PC-9 (cell line): ENCODE measurements at regions of chr17 and their contacts with region 1.

Region 1: DNA sequence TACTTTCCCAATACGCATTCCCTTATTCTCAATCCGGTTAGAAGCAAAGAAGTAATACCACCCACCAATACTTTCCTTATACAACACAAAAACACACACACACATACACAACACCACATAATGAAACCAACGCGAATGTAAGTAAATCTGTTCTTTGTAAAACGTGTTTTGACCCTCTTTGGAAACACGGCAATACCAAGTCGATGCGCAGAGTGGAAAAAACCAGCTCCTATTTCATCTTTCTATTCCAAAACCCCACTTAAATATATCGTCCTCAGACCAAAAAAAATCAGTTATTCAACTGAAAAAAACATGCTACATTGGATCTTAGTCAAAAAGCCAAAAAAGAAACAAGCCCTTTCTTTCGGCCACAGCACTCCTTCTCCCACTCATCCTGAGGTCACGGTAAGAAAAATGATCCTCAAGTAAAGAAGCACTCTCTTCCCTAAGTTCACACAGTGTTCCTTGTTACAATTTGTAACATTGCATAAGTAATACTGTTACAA is 31.0 kb upstream of the ARL4D start:
- DNase-seq: peak; percentile 46 to 97
- H3K4me3 ChIP-seq: peak overlapping the region; percentile 61; the same call in 1 of the 2 replicates
- H3K27ac ChIP-seq: peak overlapping the region; percentile 100
- H3K4me1 ChIP-seq: peaks cover 42% of the 10 kb centered on the region
- H3K27me3 ChIP-seq: no peaks in the 10 kb centered on the region
- CTCF ChIP-seq: no peak

Region 2: GRCh38 chr17:43170766-43171585 is 196.8 kb before region 1 on chr17 and contains the start of gene NBR1:
- CTCF ChIA-PET with region 1: no interaction called
- POLR2A ChIA-PET with region 1: interaction called, 10 read pairs
- intact Hi-C with region 1: no loop called
- DNase-seq: peak; percentile 93
- H3K4me3 ChIP-seq: peak within 1 kb of the TSS; percentile 71
- H3K27ac ChIP-seq: peak within 1 kb of the TSS; percentile 95
- H3K4me1 ChIP-seq: peaks cover 14% of the 10 kb centered on the region
- H3K27me3 ChIP-seq: no peaks in the 10 kb centered on the region
- CTCF ChIP-seq: no peak
- total RNA-seq, gene NBR1: 80.5 and 93.7 TPM in 2 replicates

Region 3: GRCh38 chr17:43314611-43315011 is 53.2 kb before region 1 on chr17:
- CTCF ChIA-PET with region 1: no interaction called
- POLR2A ChIA-PET with region 1: interaction called, 11 read pairs
- intact Hi-C with region 1: no loop called
- DNase-seq: no peak
- H3K4me3 ChIP-seq: no peak overlapping the region
- H3K27ac ChIP-seq: no peak overlapping the region
- H3K4me1 ChIP-seq: peaks cover 4% of the 10 kb centered on the region; the same call in 1 of the 2 replicates
- H3K27me3 ChIP-seq: no peaks in the 10 kb centered on the region
- CTCF ChIP-seq: no peak

Region 4: GRCh38 chr17:43388359-43389045 is 20.7 kb after region 1 on chr17:
- CTCF ChIA-PET with region 1: interaction called, 11 read pairs
- POLR2A ChIA-PET with region 1: interaction called, 71 read pairs
- intact Hi-C with region 1: loop called (anchors 1 kb)
- DNase-seq: peak; percentile 84 to 91
- H3K4me3 ChIP-seq: peak overlapping the region; percentile 94
- H3K27ac ChIP-seq: peak overlapping the region; percentile 91
- H3K4me1 ChIP-seq: peaks cover 17% of the 10 kb centered on the region
- H3K27me3 ChIP-seq: no peaks in the 10 kb centered on the region
- CTCF ChIP-seq: no peak

Region 5: GRCh38 chr17:43483674-43484372 is 116.0 kb after region 1 on chr17 and contains the start of gene DHX8:
- CTCF ChIA-PET with region 1: interaction called, 8 read pairs
- POLR2A ChIA-PET with region 1: interaction called, 32 read pairs
- intact Hi-C with region 1: loop called (anchors 1 kb)
- DNase-seq: peak; percentile 96 to 97
- H3K4me3 ChIP-seq: peak within 1 kb of the TSS; percentile 87
- H3K27ac ChIP-seq: peak within 1 kb of the TSS; percentile 56
- H3K4me1 ChIP-seq: peaks cover 19% of the 10 kb centered on the region
- H3K27me3 ChIP-seq: no peaks in the 10 kb centered on the region
- CTCF ChIP-seq: peak; percentile 100
- total RNA-seq, gene DHX8: 42.4 and 55.4 TPM in 2 replicates

Region 6: DNA sequence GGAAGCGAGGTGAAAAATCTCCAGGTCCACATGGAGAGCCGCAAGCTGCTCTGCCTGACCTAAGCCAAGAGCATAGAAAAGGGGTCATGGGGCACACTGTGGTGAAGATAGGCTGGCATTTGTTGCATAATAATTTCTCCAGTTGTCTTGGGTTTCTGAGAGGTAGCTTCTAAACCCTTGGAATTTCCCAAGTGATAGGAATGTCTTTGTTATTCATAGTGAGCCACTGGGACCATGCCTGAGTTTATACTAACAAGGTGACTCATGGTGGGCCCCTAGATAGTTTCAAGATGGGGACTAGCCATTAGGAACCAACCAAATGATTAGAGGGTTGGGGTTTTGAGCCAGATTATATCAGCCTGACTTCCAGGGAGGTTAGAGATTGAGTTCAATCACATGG is 365.2 kb after region 1 on chr17:
- CTCF ChIA-PET with region 1: no interaction called
- POLR2A ChIA-PET with region 1: interaction called, 12 read pairs
- intact Hi-C with region 1: no loop called
- DNase-seq: peak in 1 of 2 experiments; percentile 69
- H3K4me3 ChIP-seq: no peak overlapping the region
- H3K27ac ChIP-seq: no peak overlapping the region
- H3K4me1 ChIP-seq: peaks cover 7% of the 10 kb centered on the region
- H3K27me3 ChIP-seq: no peaks in the 10 kb centered on the region
- CTCF ChIP-seq: no peak

Region 7: GRCh38 chr17:43760254-43760852 is 392.6 kb after region 1 on chr17:
- CTCF ChIA-PET with region 1: no interaction called
- POLR2A ChIA-PET with region 1: interaction called, 10 read pairs
- intact Hi-C with region 1: no loop called
- DNase-seq: peak; percentile 77 to 92
- H3K4me3 ChIP-seq: no peak overlapping the region
- H3K27ac ChIP-seq: no peak overlapping the region
- H3K4me1 ChIP-seq: peaks cover 11% of the 10 kb centered on the region
- H3K27me3 ChIP-seq: no peaks in the 10 kb centered on the region
- CTCF ChIP-seq: peak; percentile 99